Activated CD4-positive, alpha-beta T cell treated with anti-CD3 and anti-CD28 coated beads for 36 hours (primary cell): ENCODE measurements at regions of chr14 and their contacts with region 1.

Region 1: GRCh38 chr14:25400607-25401206 is 350.8 kb upstream of the STXBP6 start:
- DNase-seq: peak; percentile 58
- ATAC-seq: no peak
- H3K4me3 Mint-ChIP-seq: no peak overlapping the region
- H3K27ac Mint-ChIP-seq: no peak overlapping the region
- H3K4me1 Mint-ChIP-seq: no peaks in the 10 kb centered on the region
- H3K27me3 Mint-ChIP-seq: peaks cover 3% of the 10 kb centered on the region

Region 2: GRCh38 chr14:25411781-25412757 is 11.4 kb after region 1 on chr14:
- CTCF ChIA-PET with region 1: interaction called, 14 read pairs
- POLR2A ChIA-PET with region 1: no interaction called
- intact Hi-C with region 1: no loop called
- DNase-seq: no peak
- ATAC-seq: no peak
- H3K4me3 Mint-ChIP-seq: no peak overlapping the region
- H3K27ac Mint-ChIP-seq: no peak overlapping the region
- H3K4me1 Mint-ChIP-seq: no peaks in the 10 kb centered on the region
- H3K27me3 Mint-ChIP-seq: no peaks in the 10 kb centered on the region

Region 3: DNA sequence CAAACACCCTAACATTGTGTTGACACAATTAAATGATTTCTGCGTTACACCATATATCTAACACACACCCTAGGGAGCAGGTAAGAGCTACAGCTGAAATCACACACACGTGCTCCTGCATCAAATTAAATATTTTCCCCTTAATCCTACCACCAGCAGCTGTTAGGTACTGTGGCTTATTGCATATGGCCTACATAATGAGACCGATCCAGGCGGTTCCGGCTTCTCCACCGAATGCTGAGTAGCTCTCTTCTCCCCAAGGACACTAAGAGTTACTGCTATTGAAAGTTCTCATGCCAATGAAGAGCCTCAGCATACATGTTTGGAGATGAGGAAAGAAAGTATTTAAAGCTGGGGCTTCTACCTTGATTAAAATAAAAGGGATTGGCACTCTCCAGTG is 121.4 kb after region 1 on chr14:
- CTCF ChIA-PET with region 1: no interaction called
- POLR2A ChIA-PET with region 1: no interaction called
- intact Hi-C with region 1: no loop called
- DNase-seq: no peak
- ATAC-seq: no peak
- H3K4me3 Mint-ChIP-seq: no peak overlapping the region
- H3K27ac Mint-ChIP-seq: no peak overlapping the region
- H3K4me1 Mint-ChIP-seq: no peaks in the 10 kb centered on the region
- H3K27me3 Mint-ChIP-seq: no peaks in the 10 kb centered on the region